ENCODE measurements at regions of chr13 and their contacts with region 1.

Region 1: DNA sequence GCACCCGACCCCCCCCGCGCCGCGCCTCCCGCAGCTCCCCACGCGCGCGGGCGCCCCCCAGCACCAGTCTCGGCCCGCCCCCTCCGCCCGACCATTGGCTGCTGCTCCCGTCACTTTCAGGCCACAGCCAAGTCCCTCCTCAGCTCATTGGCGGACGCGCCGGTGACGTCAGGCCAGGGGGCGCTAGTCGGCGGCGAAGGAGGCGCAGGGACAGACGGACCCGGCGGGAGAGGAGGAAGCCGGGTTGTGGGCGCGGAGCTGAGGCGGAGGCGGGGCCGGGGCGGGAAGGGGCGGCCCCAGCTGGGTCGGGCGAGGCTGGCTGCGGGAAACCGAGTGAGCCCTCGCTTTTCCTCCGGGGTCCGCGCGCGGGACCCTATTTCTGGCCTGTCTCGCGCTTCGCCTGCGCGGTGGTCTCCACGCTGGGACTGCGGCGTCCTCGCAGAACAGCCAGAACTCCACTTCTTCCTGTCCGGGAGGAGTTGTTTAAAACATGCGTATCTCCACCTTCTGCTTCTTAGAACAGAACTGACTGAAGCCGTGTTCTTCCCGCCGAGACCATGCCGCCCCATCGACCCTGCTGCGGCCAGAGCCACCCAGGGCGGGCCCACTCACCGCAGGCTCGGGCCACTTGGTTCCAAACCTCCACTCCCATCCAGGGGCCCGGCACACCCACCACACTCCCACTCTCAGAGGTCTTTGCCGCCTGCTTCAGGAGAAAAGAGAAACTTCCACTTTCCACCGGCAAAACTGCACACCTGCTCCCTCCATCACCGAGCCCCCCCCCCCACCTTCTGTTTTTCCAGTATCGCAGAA is 459 bp upstream of the TMTC4 start:
- DNase-seq: peak; percentile 97
- H3K4me3 Mint-ChIP-seq: peak overlapping the region; percentile 85
- H3K27ac Mint-ChIP-seq: peak overlapping the region; percentile 28
- H3K4me1 Mint-ChIP-seq: peaks cover 19% of the 10 kb centered on the region
- H3K27me3 Mint-ChIP-seq: no peaks in the 10 kb centered on the region
- CTCF ChIP-seq: no peak

Region 2: GRCh38 chr13:100987953-100988352 is 312.9 kb after region 1 on chr13:
- CTCF ChIA-PET with region 1: no interaction called
- POLR2A ChIA-PET with region 1: no interaction called
- intact Hi-C with region 1: loop called (anchors 1 kb)
- DNase-seq: peak; percentile 49
- H3K4me3 Mint-ChIP-seq: no peak overlapping the region
- H3K27ac Mint-ChIP-seq: no peak overlapping the region
- H3K4me1 Mint-ChIP-seq: no peaks in the 10 kb centered on the region
- H3K27me3 Mint-ChIP-seq: no peaks in the 10 kb centered on the region
- CTCF ChIP-seq: no peak

Measured in MCF 10A (cell line).